HepG2 (cell line): ENCODE measurements at regions of chr7 and their contacts with region 1.

Region 1: GRCh38 chr7:91880413-91881241 is at the start of gene MTERF1:
- DNase-seq: peak; percentile 86
- ATAC-seq: peak; percentile 98
- H3K4me3 ChIP-seq: peak within 1 kb of the TSS; percentile 82 to 89 (median 83)
- H3K27ac ChIP-seq: peak within 1 kb of the TSS; percentile 72
- H3K4me1 ChIP-seq: peaks cover 23% of the 10 kb centered on the region
- H3K27me3 ChIP-seq: peaks cover 0 to 5% of the 10 kb centered on the region in 2 experiments; a peak in 1 of 5 replicates
- CTCF ChIP-seq: peak; percentile 100
- EP300 ChIP-seq: peak in 1 of 2 experiments; percentile 16; a peak in 1 of 4 replicates
- POLR2A ChIP-seq: peak; percentile 88 to 90
- RAD21 ChIP-seq: peak; percentile 90
- total RNA-seq, gene MTERF1: 19.3 and 25.2 TPM in 2 replicates

Region 2: DNA sequence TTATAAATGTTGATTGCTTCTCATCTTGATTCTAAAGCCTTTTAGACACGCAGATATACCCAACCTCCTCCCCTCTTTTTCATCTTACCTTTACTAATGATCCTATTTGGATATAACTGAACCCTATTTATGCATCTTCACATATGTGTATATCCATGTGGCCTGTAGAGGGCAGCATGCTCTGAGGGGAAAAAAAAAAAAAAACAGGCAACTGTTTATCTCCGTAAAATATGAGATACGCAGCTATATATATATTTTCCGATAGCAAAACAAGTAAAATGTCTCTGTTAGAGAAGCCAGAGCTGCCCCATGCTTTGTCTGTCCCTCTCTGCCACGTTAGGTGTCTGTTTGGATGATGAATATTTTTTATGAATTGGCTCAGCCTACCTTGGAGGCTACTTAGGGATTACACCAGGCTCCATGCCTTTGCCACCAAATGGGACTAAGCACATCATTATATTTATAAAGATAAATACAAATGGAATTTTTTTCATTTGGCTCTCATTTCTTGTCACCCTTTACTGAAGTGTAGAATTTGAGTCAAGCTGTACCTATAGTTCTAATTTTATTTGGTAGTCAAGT is 791.2 kb before region 1 on chr7:
- CTCF ChIA-PET with region 1: interaction called, 5 read pairs
- POLR2A ChIA-PET with region 1: no interaction called
- in situ Hi-C with region 1: no loop called
- intact Hi-C with region 1: loop called (anchors 10 kb)
- DNase-seq: peak; percentile 16
- ATAC-seq: peak; percentile 69
- H3K4me3 ChIP-seq: no peak overlapping the region
- H3K27ac ChIP-seq: no peak overlapping the region
- H3K4me1 ChIP-seq: no peaks in the 10 kb centered on the region
- H3K27me3 ChIP-seq: no peaks in the 10 kb centered on the region
- CTCF ChIP-seq: peak; percentile 59
- EP300 ChIP-seq: no peak
- POLR2A ChIP-seq: no peak
- RAD21 ChIP-seq: no peak

Region 3: DNA sequence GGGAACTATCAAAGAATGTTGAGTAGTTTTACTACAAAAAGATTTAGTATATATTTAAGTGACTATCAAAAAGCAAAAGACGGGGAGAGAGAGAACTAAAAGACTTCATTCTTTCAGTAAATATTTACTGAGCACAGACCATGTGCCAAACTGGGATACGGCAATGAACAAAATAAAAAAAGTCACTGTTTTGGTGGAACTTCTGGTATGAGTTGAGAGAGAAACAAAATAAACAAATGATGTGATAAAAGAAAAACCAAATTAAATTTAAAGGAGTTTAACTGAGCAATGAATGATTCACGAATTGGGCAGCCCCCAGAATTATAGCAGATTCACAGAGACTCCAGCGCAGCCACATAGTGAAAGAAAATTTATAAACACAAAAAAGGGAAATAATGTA is 42.2 kb after region 1 on chr7:
- CTCF ChIA-PET with region 1: no interaction called
- POLR2A ChIA-PET with region 1: no interaction called
- in situ Hi-C with region 1: no loop called
- intact Hi-C with region 1: no loop called
- DNase-seq: no peak
- ATAC-seq: no peak
- H3K4me3 ChIP-seq: no peak overlapping the region
- H3K27ac ChIP-seq: no peak overlapping the region
- H3K4me1 ChIP-seq: peaks cover 11% of the 10 kb centered on the region; the same call in 1 of the 2 replicates
- H3K27me3 ChIP-seq: 0 out of 5 replicates have a peak, but pooled peaks cover 0 to 2% of the 10 kb centered on the region in 2 experiments
- CTCF ChIP-seq: no peak
- EP300 ChIP-seq: no peak
- POLR2A ChIP-seq: no peak
- RAD21 ChIP-seq: no peak

Region 4: GRCh38 chr7:91940572-91941341 is 60.1 kb after region 1 on chr7 and contains the start of gene AKAP9:
- CTCF ChIA-PET with region 1: no interaction called
- POLR2A ChIA-PET with region 1: interaction called, 13 read pairs
- in situ Hi-C with region 1: no loop called
- intact Hi-C with region 1: loop called (anchors 2 kb)
- DNase-seq: peak; percentile 77
- ATAC-seq: peak; percentile 97
- H3K4me3 ChIP-seq: peak within 1 kb of the TSS; percentile 85 to 98 (median 91)
- H3K27ac ChIP-seq: peak within 1 kb of the TSS; percentile 91
- H3K4me1 ChIP-seq: peaks cover 36% of the 10 kb centered on the region
- H3K27me3 ChIP-seq: no peaks in the 10 kb centered on the region; a peak in 1 of 5 replicates
- CTCF ChIP-seq: peak; percentile 45
- EP300 ChIP-seq: no peak
- POLR2A ChIP-seq: peak; percentile 81 to 88
- RAD21 ChIP-seq: no peak
- total RNA-seq, gene AKAP9: 33.1 TPM in 2 replicates

Region 5: GRCh38 chr7:92043637-92044036 is 163.0 kb after region 1 on chr7:
- CTCF ChIA-PET with region 1: interaction called, 3 read pairs
- POLR2A ChIA-PET with region 1: interaction called, 6 read pairs
- in situ Hi-C with region 1: no loop called
- intact Hi-C with region 1: loop called (anchors 2 kb)
- DNase-seq: no peak
- ATAC-seq: no peak
- H3K4me3 ChIP-seq: no peak overlapping the region
- H3K27ac ChIP-seq: peak overlapping the region; percentile 4
- H3K4me1 ChIP-seq: peaks cover 26% of the 10 kb centered on the region
- H3K27me3 ChIP-seq: no peaks in the 10 kb centered on the region
- CTCF ChIP-seq: no peak
- EP300 ChIP-seq: no peak
- POLR2A ChIP-seq: no peak
- RAD21 ChIP-seq: no peak

Region 6: GRCh38 chr7:92461027-92462003 is 580.7 kb after region 1 on chr7:
- CTCF ChIA-PET with region 1: no interaction called
- POLR2A ChIA-PET with region 1: no interaction called
- in situ Hi-C with region 1: no loop called
- intact Hi-C with region 1: loop called (anchors 10 kb)
- DNase-seq: peak; percentile 29
- ATAC-seq: peak; percentile 90
- H3K4me3 ChIP-seq: no peak overlapping the region
- H3K27ac ChIP-seq: no peak overlapping the region
- H3K4me1 ChIP-seq: no peaks in the 10 kb centered on the region
- H3K27me3 ChIP-seq: no peaks in the 10 kb centered on the region
- CTCF ChIP-seq: peak; percentile 66
- EP300 ChIP-seq: no peak
- POLR2A ChIP-seq: no peak
- RAD21 ChIP-seq: 0 out of 2 replicates have a peak, but pooled peaks have one; percentile 15